Panc1 (cell line): ENCODE measurements at regions of chr5 and their contacts with region 1.

Region 1: DNA sequence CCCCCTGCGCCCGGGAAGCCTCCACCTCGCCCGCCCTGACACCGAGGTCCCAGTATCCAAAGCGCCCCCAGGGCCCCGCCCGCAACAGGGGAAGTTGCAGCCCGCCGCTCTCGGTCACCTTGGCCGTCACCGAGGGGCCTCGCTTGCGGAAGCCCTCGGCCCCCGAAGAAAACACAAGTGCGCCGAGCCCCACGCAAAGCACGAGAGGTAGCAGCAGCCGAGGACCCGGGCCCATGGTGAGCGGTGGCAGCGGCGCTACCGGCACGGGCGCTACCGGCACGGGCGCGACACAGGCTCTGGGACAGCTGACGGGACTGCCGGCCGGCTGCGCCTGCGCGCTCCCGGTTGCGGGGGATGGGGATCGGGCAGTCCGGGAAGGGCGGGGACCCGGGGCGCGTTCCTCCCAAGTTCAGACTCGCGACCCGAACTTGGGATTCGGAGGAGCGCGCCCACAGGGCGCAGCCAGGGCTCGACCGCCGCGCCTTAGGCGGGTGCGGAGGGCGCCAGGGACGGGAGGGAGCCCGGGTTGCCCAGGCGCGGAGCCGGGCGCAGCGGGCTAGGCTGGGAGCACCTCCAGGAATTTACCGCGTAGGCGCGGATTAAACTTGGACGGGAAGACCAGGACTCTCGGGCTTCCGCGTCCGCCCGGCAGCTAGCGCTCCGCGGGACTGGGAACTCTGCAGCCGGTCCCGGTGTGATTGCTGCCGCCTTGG is at the start of gene PPIC:
- DNase-seq: peak; percentile 64
- ATAC-seq: peak; percentile 95
- H3K4me3 ChIP-seq: peak within 1 kb of the TSS; percentile 80 to 81
- H3K27ac ChIP-seq: peak within 1 kb of the TSS; percentile 95
- H3K4me1 ChIP-seq: peaks cover 11% of the 10 kb centered on the region
- H3K27me3 ChIP-seq: no peaks in the 10 kb centered on the region
- CTCF ChIP-seq: no peak
- total RNA-seq, gene PPIC: 45.8 TPM

Region 2: DNA sequence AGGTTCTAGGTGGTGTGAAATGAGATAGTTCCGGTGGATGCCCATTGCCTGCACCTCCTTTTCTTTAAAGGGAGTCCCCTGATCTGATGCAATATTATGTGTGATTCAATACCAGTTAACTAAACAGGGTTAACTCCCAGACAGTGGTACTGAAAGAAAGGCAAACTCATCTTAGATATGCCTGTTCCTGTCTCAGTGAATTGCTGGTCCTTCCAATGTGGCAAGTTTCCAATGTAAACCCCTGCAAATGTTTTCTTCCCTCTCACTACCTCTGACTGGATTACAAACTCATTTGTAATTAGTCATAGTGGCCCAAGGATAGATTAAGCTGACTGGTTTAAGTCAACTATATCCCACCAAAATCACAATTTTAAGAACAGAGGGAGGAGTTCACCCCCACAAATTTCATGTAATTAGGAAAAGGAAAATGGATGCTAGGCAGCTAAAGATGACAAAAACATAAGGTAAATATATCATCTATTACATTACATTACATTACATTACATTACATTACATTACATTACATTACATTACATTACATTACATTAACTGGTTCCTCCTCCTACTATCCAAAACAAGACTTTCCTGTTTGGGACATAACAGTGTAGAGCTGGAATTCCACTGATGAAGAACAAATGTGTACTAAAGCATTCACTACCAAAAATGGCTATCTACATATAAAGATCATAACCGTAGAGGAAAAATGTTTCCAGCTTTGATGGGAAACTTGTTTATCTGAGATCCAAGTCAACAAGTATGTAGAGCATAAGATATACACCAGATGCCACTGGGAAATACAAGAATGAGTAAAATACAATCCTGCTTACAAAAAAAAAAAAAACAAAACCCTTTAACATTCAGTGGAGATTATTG is 383.2 kb before region 1 on chr5:
- CTCF ChIA-PET with region 1: interaction called, 14 read pairs
- POLR2A ChIA-PET with region 1: no interaction called
- in situ Hi-C with region 1: no loop called
- intact Hi-C with region 1: no loop called
- DNase-seq: no peak
- ATAC-seq: no peak
- H3K4me3 ChIP-seq: no peak overlapping the region
- H3K27ac ChIP-seq: no peak overlapping the region
- H3K4me1 ChIP-seq: no peaks in the 10 kb centered on the region
- H3K27me3 ChIP-seq: no peaks in the 10 kb centered on the region; the same call in 1 of the 2 replicates
- CTCF ChIP-seq: no peak

Region 3: DNA sequence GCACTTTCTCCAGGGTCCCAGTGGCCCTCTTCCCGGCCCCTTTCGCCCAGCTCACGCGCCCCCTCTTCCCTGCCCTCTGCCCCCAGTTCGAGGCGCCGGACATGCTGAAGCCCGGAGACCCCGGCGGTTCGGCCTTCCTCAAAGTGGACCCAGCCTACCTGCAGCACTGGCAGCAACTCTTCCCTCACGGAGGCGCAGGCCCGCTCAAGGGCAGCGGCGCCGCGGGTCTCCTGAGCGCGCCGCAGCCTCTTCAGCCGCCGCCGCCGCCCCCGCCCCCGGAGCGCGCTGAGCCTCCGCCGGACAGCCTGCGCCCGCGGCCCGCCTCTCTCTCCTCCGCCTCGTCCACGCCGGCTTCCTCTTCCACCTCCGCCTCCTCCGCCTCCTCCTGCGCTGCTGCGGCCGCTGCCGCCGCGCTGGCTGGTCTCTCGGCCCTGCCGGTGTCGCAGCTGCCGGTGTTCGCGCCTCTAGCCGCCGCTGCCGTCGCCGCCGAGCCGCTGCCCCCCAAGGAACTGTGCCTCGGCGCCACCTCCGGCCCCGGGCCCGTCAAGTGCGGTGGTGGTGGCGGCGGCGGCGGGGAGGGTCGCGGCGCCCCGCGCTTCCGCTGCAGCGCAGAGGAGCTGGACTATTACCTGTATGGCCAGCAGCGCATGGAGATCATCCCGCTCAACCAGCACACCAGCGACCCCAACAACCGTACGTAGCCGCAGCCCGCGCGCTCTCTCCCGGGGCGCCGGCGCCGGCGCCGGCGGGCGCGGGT is 53.5 kb after region 1 on chr5:
- CTCF ChIA-PET with region 1: no interaction called
- POLR2A ChIA-PET with region 1: no interaction called
- in situ Hi-C with region 1: no loop called
- intact Hi-C with region 1: loop called (anchors 2 kb)
- DNase-seq: no peak
- ATAC-seq: peak; percentile 64
- H3K4me3 ChIP-seq: peak overlapping the region; percentile 41 to 60
- H3K27ac ChIP-seq: no peak overlapping the region
- H3K4me1 ChIP-seq: no peaks in the 10 kb centered on the region; the same call in 1 of the 2 replicates
- H3K27me3 ChIP-seq: peaks cover 51% of the 10 kb centered on the region
- CTCF ChIP-seq: no peak

Region 4: DNA sequence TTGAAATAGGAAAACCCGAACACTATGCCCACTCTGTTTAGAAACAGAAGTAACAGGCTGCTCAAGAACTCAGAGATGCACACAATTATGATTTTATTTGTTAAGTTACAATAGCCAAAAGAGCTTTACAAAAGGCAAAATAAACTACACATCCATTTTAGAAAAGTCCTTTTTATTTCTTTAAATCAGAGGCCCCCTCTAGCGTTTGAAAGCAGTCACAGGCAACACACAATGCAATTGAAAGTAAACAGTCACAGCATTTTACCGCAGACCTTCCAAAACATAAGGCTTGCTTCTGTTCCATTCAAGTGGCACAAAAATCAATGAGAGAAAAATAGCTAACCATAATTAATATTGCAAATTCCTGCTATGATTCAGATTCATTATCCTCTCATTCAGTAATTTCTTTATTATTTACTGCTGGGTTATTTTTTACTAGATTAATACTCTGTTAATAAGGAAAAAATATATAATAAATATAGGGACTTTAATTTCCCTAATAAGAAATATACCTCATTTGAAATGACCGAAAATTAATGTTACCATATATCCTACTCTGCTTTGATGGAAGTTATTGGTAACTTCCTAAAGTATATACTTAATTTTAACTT is 308.4 kb after region 1 on chr5:
- CTCF ChIA-PET with region 1: no interaction called
- POLR2A ChIA-PET with region 1: no interaction called
- in situ Hi-C with region 1: no loop called
- intact Hi-C with region 1: loop called (anchors 10 kb)
- DNase-seq: peak; percentile 18
- ATAC-seq: no peak
- H3K4me3 ChIP-seq: no peak overlapping the region
- H3K27ac ChIP-seq: no peak overlapping the region
- H3K4me1 ChIP-seq: no peaks in the 10 kb centered on the region
- H3K27me3 ChIP-seq: no peaks in the 10 kb centered on the region; the same call in 1 of the 2 replicates
- CTCF ChIP-seq: peak; percentile 68; the same call in 1 of the 2 replicates